GM12878 (cell line): ENCODE measurements at regions of chr22 and their contacts with region 1.

Region 1: GRCh38 chr22:29766632-29767170 is at the start of gene ZMAT5:
- DNase-seq: peak; percentile 94
- ATAC-seq: peak; percentile 97
- H3K4me3 ChIP-seq: peak within 1 kb of the TSS; percentile 98
- H3K27ac ChIP-seq: peak within 1 kb of the TSS; percentile 84
- H3K4me1 ChIP-seq: peaks cover 4% of the 10 kb centered on the region
- H3K27me3 ChIP-seq: no peaks in the 10 kb centered on the region
- CTCF ChIP-seq: no peak
- EP300 ChIP-seq: no peak
- POLR2A ChIP-seq: peak; percentile 75
- RAD21 ChIP-seq: no peak
- polyA plus RNA-seq, gene ZMAT5: 2.3 to 10.4 TPM

Region 2: DNA sequence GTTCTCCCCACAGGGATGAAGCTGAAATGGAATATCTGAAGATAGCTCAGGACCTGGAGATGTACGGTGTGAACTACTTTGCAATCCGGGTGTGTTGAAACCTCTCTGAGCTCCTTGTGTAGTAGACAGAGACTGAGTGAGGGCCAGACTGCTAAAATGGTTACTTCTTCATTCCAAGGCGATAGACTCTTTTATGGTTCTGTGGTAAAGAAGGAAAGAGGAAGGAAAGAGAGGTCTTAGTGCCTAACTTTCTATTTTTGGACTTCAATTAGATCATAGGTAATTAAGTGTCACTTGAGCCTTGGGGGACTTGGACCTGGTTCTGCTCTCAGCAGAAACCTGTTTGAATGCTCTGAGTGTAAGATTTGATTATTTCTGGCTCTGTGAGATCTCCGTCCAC is 108.5 kb before region 1 on chr22:
- CTCF ChIA-PET with region 1: no interaction called
- POLR2A ChIA-PET with region 1: no interaction called
- RAD21 ChIA-PET with region 1: no interaction called
- SMC1A ChIA-PET with region 1: no interaction called
- in situ Hi-C with region 1: no loop called
- intact Hi-C with region 1: no loop called
- DNase-seq: no peak
- ATAC-seq: no peak
- H3K4me3 ChIP-seq: no peak overlapping the region
- H3K27ac ChIP-seq: no peak overlapping the region
- H3K4me1 ChIP-seq: no peaks in the 10 kb centered on the region
- H3K27me3 ChIP-seq: no peaks in the 10 kb centered on the region
- CTCF ChIP-seq: no peak
- EP300 ChIP-seq: no peak
- POLR2A ChIP-seq: no peak
- RAD21 ChIP-seq: no peak

Region 3: DNA sequence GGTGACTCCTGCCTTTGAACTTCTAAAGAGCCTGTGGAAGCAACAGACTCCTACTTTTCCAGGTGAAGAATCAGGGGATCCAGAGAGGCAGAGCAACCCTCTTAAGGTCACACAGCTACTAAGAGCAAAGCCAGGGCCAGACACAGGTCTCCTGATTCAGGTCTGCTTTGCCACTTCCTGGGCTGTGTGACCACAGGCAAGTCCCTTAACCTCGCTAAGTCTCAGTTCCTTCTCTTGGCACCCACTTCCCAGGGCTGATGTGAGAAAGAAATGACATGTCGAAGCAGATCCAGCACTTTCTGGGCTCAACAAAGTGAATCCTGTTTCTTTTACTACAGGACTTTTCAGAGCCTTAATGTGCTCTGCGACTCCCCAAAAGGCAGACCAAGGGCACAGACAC is 30.6 kb after region 1 on chr22:
- CTCF ChIA-PET with region 1: interaction called, 3 read pairs
- POLR2A ChIA-PET with region 1: interaction called, 5 read pairs
- RAD21 ChIA-PET with region 1: no interaction called
- SMC1A ChIA-PET with region 1: interaction called, 3 read pairs
- in situ Hi-C with region 1: no loop called
- intact Hi-C with region 1: loop called (anchors 1 kb)
- DNase-seq: peak; percentile 71
- ATAC-seq: peak; percentile 98
- H3K4me3 ChIP-seq: no peak overlapping the region
- H3K27ac ChIP-seq: peak overlapping the region; percentile 51
- H3K4me1 ChIP-seq: peaks cover 27% of the 10 kb centered on the region
- H3K27me3 ChIP-seq: no peaks in the 10 kb centered on the region
- CTCF ChIP-seq: no peak
- EP300 ChIP-seq: 0 out of 4 replicates have a peak, but pooled peaks have one; percentile 11 to 59
- POLR2A ChIP-seq: no peak
- RAD21 ChIP-seq: no peak